ENCODE measurements at regions of chr17 and their contacts with region 1.

Region 1: GRCh38 chr17:27601069-27601975 is 29.7 kb upstream of the LGALS9 start:
- DNase-seq: peak; percentile 71
- CTCF ChIP-seq: peak; percentile 89

Region 2: DNA sequence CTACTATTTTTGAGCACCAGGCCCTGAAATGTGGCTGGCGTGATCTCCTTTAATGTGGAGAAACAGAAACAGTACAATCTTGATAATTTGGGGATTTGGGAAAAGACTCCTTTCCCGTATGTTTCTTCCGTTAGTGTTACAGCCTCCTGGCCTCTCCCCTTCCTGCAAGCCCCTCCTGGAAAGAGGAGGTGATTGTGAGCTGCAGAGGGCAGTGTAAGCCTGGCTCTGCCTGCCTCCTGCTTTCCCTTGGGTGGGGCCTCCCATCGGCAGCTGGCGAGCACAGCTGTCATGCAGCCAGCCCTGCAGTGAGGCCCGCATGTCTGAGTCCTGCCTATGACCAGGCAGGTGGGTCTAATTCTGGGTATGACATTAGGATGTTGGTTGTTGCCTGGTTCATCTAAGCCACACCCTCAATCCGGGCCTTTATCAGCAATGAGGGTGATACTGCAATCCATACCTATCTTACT is 356.1 kb before region 1 on chr17:
- CTCF ChIA-PET with region 1: interaction called, 139 read pairs
- POLR2A ChIA-PET with region 1: no interaction called
- DNase-seq: peak; percentile 82
- CTCF ChIP-seq: peak; percentile 74

Region 3: GRCh38 chr17:27381007-27381501 is 220.3 kb before region 1 on chr17:
- CTCF ChIA-PET with region 1: interaction called, 74 read pairs
- POLR2A ChIA-PET with region 1: no interaction called
- DNase-seq: peak; percentile 91
- CTCF ChIP-seq: peak; percentile 98

Region 4: DNA sequence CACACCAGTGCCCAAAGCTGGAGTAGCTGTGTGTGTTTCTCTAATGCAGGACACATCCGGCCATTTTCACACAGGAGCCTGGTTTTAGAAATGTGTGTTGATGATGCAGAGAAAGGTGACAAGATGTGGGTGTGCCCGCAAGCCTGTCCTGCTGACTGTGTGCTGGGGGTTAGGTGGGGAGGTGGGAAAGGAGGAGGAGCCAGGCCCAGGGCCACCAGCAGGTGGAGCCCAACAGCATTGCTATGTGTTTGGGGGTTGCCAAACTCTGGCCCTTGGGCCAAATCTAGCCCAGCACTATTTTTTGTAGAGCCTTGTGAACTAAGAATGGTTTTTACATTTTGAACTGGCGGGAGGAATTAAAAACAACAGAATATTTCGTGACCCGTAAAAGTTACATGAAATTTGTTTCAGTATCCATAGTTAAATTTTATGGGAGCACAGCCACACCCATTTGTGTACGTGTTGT is 32.0 kb before region 1 on chr17:
- CTCF ChIA-PET with region 1: interaction called, 125 read pairs
- POLR2A ChIA-PET with region 1: no interaction called
- DNase-seq: peak; percentile 74
- CTCF ChIP-seq: peak; percentile 72

Region 5: DNA sequence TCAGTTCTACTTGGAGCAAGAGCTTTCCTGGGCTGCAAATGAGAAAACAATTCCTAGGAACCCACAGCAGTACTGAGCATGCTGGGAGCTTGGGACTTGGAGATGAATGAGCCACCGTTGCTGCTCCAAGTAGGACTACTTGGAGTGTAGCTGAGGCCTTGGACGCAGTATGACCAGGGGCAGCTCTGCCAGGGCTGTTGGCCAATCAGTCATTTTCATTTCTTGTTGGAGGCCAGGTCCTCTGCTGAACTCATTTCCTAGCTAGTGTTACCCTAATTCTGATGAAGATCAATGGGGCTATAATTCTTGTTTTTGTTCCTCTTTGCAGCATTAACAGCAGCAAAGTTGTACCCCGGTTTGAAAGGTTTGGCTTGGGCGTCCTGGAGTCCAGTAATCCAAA is 21.7 kb after region 1 on chr17:
- CTCF ChIA-PET with region 1: interaction called, 118 read pairs
- POLR2A ChIA-PET with region 1: no interaction called
- DNase-seq: no peak
- CTCF ChIP-seq: no peak

Region 6: DNA sequence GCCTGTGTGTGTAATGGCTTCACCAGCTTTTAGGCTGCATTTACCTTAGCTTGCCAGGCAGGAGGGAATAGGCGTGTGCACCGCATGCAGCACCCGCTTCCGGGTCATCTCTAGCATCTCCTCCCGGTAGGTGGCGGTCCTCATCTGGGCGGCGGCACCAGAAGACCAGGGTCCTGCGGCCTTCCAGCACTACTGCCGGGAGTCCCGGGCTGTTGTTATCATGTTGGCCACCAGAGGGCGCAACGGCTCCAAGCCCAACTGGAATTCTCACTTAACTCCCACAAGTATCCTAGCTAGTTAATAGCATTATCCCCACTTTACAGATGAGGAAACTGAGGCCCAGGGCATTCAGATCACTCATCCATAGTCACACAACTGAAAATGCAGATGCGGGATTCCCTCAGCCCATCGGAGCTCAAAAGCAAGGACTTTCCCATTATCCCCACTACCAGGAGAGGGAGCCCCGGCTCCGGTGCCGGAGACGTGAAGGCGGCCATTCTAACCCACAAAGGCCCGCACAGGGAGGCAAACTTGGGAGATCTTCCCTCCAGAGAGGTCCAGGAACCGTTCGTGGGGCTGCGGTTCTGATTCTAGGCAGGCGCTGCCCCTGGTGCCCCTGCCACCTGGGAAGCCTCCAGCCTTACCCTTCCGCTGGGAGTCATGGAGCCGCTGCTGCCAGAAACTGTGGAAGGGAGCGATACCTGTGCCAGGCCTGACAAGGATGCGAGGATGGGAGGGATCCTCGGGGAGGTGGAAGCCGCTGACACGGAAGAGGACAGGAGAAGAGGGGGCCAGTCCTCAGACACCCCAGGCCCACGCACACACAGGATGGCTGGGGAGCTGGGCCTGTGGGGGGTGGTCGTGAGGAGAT is 53.6 kb after region 1 on chr17:
- CTCF ChIA-PET with region 1: interaction called, 331 read pairs
- POLR2A ChIA-PET with region 1: no interaction called
- DNase-seq: peak; percentile 85
- CTCF ChIP-seq: peak; percentile 82

Measured in GM10248 (cell line).